ENCODE measurements at regions of chr14 and their contacts with region 1.

Region 1: DNA sequence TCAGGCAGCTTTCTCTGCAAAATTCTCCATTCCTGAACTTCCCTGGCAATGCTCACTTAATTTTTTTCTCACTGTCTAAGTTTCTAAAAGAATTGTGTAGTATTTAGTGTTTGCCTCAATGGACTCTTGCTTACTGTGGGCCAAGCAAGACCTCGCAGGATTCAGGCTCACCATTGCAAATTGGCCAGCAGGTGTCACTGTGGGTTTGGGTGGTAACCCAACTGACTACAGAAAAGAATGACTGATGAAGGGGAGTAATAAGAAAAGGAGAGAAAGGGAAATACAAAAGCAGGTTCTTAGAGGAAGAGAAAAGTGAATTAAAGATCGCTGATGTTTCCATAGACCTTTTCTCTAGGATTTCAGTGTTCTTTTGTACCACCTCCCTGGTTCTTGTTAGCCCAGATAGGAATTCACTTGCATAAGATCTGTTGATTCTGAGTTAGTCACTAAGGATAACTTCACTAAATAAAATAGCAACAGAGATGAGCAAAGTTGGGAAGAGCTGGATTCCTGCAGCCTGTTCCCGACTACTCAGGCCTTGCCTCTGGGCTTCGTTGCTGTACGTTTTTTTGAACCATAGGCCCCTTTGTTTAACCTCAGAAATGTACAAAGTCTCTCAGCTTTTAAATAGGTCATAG is 386.5 kb upstream of the DDHD1 start:
- DNase-seq: peak; percentile 53 to 86
- ATAC-seq: peak; percentile 92 to 96
- H3K4me3 ChIP-seq: no peak overlapping the region
- H3K27ac ChIP-seq: peak overlapping the region; percentile 34 to 61
- H3K4me1 ChIP-seq: peaks cover 17% of the 10 kb centered on the region
- CTCF ChIP-seq: peak; percentile 95
- EP300 ChIP-seq: no peak
- POLR2A ChIP-seq: no peak
- RAD21 ChIP-seq: peak; percentile 94 to 97

Region 2: DNA sequence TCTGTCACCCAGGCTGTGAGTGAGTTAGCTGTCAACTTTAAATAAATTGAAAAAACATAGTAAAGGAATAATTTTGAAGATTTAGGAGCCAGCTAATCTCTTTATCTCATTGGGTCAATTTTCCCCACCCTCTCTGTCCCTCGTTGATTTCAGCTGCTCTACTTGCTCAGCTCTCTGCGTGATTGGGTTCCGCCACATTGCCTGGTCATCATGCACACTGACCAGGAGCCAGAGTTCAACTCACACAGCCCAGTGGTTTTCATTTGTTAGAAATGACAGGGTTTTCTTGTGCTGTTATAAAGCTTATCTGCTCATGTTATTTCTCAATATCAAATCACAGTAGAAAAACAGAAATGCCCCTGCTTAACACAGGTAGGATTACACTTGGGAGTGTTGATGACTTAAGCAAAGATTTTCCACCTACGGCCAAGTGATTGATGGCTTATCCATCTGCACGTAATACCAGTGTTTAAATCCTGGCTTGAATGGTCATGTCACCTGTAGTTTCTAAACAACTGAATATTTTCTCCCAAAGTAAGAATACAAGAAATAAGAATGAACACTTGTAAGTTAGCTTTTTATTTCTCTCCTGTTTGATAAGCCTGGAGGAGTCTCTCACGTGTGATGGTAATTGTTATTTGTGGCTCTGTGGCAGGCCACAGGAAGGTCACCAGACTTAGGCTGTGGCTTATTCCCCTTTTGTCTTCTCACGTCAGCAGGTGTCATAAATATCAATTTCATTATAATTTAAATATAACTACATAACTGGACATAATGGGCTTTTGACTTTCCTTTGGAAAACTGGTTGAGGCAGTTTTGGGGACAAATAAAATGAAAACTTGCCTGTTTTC is 19.3 kb before region 1 on chr14:
- CTCF ChIA-PET with region 1: interaction called, 15 read pairs
- POLR2A ChIA-PET with region 1: no interaction called
- DNase-seq: no peak
- ATAC-seq: no peak
- H3K4me3 ChIP-seq: no peak overlapping the region
- H3K27ac ChIP-seq: no peak overlapping the region
- H3K4me1 ChIP-seq: no peaks in the 10 kb centered on the region
- CTCF ChIP-seq: no peak
- EP300 ChIP-seq: no peak
- POLR2A ChIP-seq: no peak
- RAD21 ChIP-seq: no peak

Region 3: DNA sequence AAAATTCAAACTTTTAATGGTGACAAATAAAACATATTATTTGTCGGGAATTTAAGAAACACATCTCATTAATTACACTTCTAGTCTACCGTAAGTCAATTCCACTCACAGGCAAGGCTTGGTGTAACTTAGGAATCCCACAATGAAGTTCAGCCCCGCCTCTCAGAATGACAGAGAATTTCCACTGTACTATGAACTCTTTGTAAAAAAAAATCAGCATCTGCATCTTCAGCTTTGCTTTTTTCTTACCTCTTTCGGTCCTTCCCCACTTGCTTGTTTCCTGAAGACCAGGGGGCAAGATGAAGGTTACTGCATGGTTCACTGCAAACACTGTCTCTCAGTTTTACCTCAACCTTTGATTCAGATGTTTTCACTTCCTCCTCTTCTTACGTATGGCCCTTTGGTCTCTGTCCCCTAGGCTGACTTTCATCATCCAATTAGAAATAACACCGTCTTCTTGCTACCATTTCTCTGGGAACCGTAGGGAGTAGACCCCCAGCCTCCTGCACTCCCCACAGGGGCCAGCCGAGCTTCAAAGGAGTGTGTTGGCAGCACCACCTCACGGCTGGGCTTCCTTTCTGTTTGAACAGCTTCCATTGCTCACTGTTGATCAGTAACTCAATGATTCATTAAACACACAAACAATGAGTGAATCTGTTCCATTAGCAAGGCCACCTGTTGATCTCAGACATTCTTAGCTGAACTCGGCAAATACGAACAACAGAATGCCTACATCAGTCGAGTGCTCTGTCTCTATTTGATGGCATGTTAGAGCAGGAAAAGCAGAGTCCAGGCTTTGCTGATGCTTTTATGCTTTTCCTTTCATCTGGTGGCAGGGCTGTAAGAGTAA is 74.0 kb after region 1 on chr14:
- CTCF ChIA-PET with region 1: interaction called, 13 read pairs
- POLR2A ChIA-PET with region 1: no interaction called
- DNase-seq: peak; percentile 89 to 97
- ATAC-seq: peak; percentile 98
- H3K4me3 ChIP-seq: peak overlapping the region; percentile 28
- H3K27ac ChIP-seq: peak overlapping the region; percentile 69 to 79
- H3K4me1 ChIP-seq: peaks cover 33% of the 10 kb centered on the region
- CTCF ChIP-seq: no peak; the same call in 2 of the 3 replicates
- EP300 ChIP-seq: peak; percentile 84 to 93; a peak in 4 of 5 replicates
- POLR2A ChIP-seq: no peak
- RAD21 ChIP-seq: peak; percentile 52 to 74

Region 4: GRCh38 chr14:54105898-54106297 is 566.3 kb after region 1 on chr14:
- CTCF ChIA-PET with region 1: no interaction called
- POLR2A ChIA-PET with region 1: no interaction called
- DNase-seq: no peak
- ATAC-seq: no peak
- H3K4me3 ChIP-seq: no peak overlapping the region
- H3K27ac ChIP-seq: no peak overlapping the region
- H3K4me1 ChIP-seq: peaks cover 22% of the 10 kb centered on the region
- CTCF ChIP-seq: no peak
- EP300 ChIP-seq: no peak
- POLR2A ChIP-seq: no peak
- RAD21 ChIP-seq: no peak

Region 5: GRCh38 chr14:54175298-54175942 is 635.8 kb after region 1 on chr14:
- CTCF ChIA-PET with region 1: interaction called, 32 read pairs
- POLR2A ChIA-PET with region 1: no interaction called
- DNase-seq: peak; percentile 55 to 75
- ATAC-seq: peak; percentile 74 to 84; a peak in 5 of 6 replicates
- H3K4me3 ChIP-seq: no peak overlapping the region
- H3K27ac ChIP-seq: no peak overlapping the region
- H3K4me1 ChIP-seq: no peaks in the 10 kb centered on the region
- CTCF ChIP-seq: peak; percentile 85
- EP300 ChIP-seq: no peak
- POLR2A ChIP-seq: no peak
- RAD21 ChIP-seq: peak; percentile 83 to 84

Region 6: DNA sequence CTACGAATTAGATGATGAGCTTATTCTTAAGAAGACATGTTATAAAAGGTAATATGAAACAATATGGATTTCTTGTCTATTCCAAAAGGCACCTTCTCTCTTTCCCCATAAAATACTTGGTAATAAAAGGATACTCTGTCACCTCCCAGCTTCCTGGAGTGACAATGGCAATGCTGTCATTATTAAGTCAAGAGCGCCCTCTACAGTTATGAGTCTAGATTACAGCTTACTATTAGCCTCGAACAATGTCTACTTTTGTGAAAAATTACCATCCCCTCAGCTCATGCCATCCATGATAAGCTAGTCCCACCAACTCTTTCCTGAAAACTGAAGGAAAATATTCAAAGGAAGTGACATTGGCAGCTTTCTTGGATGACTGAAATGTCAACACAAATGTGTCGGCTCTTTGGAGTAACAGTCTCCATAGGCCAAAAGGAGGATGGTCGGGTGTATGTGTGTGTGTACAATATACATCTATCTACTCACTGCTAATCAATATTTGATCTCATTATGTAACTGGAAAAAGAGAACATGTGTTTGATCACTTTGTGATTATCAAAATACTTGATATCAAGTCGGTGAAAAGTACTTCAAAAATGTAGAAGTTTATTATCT is 808.5 kb after region 1 on chr14:
- CTCF ChIA-PET with region 1: interaction called, 38 read pairs
- POLR2A ChIA-PET with region 1: no interaction called
- DNase-seq: peak; percentile 51 to 62
- ATAC-seq: peak; percentile 80 to 89
- H3K4me3 ChIP-seq: no peak overlapping the region
- H3K27ac ChIP-seq: no peak overlapping the region
- H3K4me1 ChIP-seq: no peaks in the 10 kb centered on the region
- CTCF ChIP-seq: peak; percentile 88
- EP300 ChIP-seq: no peak
- POLR2A ChIP-seq: no peak
- RAD21 ChIP-seq: peak; percentile 89 to 92

Measured in A549 (cell line).